ENCODE measurements at regions of chr6 and their contacts with region 1.

Region 1: GRCh38 chr6:38406096-38406495 is 233.6 kb downstream of the BTBD9 start:
- DNase-seq: no peak
- ATAC-seq: no peak
- H3K4me3 Mint-ChIP-seq: no peak overlapping the region
- H3K27ac Mint-ChIP-seq: no peak overlapping the region
- H3K4me1 Mint-ChIP-seq: peaks cover 14% of the 10 kb centered on the region
- H3K27me3 Mint-ChIP-seq: no peaks in the 10 kb centered on the region

Region 2: DNA sequence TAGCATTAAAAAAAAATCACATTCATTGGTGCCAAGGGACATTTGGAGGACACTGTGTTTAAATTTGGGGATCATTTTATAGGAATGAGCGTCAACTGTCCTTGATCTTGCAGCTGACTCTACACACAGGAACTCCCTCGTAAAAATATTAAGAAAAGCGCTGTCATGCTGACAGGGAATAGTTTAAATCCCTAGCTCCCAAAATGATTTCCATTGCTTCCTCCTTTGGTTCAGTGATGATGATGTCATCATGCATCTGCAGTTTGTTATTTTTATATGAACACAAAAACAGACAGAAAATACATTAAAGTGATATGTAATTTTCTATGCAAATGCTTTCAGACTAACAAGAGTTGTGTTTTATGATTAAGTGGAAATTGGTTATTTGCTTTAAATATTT is 42.0 kb before region 1 on chr6:
- CTCF ChIA-PET with region 1: no interaction called
- POLR2A ChIA-PET with region 1: no interaction called
- intact Hi-C with region 1: no loop called
- DNase-seq: no peak
- ATAC-seq: no peak
- H3K4me3 Mint-ChIP-seq: no peak overlapping the region
- H3K27ac Mint-ChIP-seq: no peak overlapping the region
- H3K4me1 Mint-ChIP-seq: no peaks in the 10 kb centered on the region
- H3K27me3 Mint-ChIP-seq: no peaks in the 10 kb centered on the region

Region 3: DNA sequence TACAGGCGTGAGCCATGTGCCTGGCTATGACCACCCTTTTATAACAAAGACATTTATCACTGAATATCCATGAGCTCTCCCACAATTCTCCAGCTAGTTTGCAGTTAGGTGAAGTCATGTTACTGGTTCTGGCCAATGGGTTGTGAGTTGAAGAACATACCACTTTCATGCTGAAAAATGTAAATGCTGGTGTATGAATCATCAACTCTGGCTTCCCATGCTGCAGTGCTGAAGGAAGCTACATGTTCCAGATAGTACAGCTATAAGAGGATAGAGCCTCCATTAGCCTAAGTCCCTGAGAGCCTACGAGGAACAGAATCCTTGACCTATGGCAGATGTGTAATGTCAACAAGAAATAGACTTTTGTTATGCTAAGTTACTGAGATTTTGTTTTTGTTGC is 53.2 kb after region 1 on chr6:
- CTCF ChIA-PET with region 1: no interaction called
- POLR2A ChIA-PET with region 1: interaction called, 10 read pairs
- intact Hi-C with region 1: no loop called
- DNase-seq: no peak
- ATAC-seq: no peak
- H3K4me3 Mint-ChIP-seq: no peak overlapping the region
- H3K27ac Mint-ChIP-seq: no peak overlapping the region
- H3K4me1 Mint-ChIP-seq: no peaks in the 10 kb centered on the region
- H3K27me3 Mint-ChIP-seq: no peaks in the 10 kb centered on the region

Measured in activated CD4-positive, alpha-beta T cell treated with anti-CD3 and anti-CD28 coated beads for 36 hours (primary cell).